Heart left ventricle (tissue), 16 donors: ENCODE measurements at regions of chr1 and their contacts with region 1.

Region 1: GRCh38 chr1:18597160-18598042 is 33.2 kb upstream of the PAX7 start:
- DNase-seq: peak in 4 of 5 donors; percentile 28 to 50 (median 36)
- ATAC-seq: peak in 3 of 4 donors; percentile 80 to 83 (median 81)
- H3K4me3 ChIP-seq: no peak overlapping the region
- H3K27ac ChIP-seq: no peak overlapping the region
- H3K4me1 ChIP-seq: peaks cover 0 to 3% (median 0%) of the 10 kb centered on the region in 12 donors
- H3K27me3 ChIP-seq: peaks cover 2 to 78% (median 19%) of the 10 kb centered on the region in 9 donors
- CTCF ChIP-seq: peak; percentile 80 to 98 (median 90)
- POLR2A ChIP-seq: no peak

Region 2: GRCh38 chr1:18360251-18360650 is 237.2 kb before region 1 on chr1:
- intact Hi-C with region 1: no loop called
- DNase-seq: no peak
- ATAC-seq: no peak
- H3K4me3 ChIP-seq: no peak overlapping the region
- H3K27ac ChIP-seq: no peak overlapping the region
- H3K4me1 ChIP-seq: no peaks in the 10 kb centered on the region
- H3K27me3 ChIP-seq: peaks cover 0 to 67% (median 5%) of the 10 kb centered on the region in 9 donors
- CTCF ChIP-seq: no peak
- POLR2A ChIP-seq: no peak

Region 3: DNA sequence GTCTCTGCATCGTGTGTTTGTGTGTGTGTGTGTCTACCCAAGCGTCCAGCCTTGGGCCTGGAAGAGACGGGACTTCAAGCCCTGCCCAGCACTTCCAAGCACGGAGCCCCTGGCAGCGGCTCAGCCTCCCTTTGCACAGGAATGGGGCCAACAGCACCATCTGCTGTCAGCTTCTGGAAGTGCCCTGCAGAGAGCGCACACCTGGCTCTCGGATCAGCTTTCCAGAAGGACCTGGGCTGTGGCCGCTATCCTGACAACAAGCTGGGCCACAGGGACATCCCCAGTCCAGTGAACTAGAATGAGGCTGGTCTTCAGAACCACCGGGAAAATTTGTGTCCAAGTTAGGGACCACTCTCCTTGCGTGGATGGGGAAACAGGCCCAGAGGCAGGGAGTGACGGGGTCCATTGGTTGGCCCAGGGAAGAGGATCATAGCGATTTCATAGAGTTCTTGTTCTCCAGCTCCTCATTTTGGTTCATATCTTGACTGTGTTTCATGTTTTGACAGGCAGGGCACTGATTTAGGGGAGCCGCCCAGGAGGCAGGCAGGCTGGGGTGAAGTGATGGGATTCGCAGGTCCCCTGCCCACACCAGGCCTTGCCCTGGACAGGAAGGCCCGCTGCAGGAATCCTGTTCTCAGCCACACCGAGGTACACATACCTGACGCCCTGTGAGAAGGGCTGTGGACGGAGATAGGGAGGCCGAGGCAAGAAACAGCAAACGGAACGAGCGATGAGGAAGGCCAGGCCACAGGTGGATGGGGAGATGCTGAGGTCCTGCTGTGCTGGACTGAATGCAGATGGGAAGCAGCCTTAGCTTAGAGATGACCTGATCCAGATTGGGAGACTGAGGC is 223.6 kb after region 1 on chr1:
- intact Hi-C with region 1: loop called (anchors 1 to 5 kb)
- DNase-seq: peak; percentile 54 to 83 (median 73)
- ATAC-seq: peak; percentile 62 to 91 (median 87)
- H3K4me3 ChIP-seq: no peak overlapping the region
- H3K27ac ChIP-seq: no peak overlapping the region
- H3K4me1 ChIP-seq: peaks cover 0 to 4% (median 0%) of the 10 kb centered on the region in 12 donors
- H3K27me3 ChIP-seq: peaks cover 9 to 49% (median 21%) of the 10 kb centered on the region in 9 donors
- CTCF ChIP-seq: peak; percentile 73 to 92 (median 81)
- POLR2A ChIP-seq: no peak

Region 4: DNA sequence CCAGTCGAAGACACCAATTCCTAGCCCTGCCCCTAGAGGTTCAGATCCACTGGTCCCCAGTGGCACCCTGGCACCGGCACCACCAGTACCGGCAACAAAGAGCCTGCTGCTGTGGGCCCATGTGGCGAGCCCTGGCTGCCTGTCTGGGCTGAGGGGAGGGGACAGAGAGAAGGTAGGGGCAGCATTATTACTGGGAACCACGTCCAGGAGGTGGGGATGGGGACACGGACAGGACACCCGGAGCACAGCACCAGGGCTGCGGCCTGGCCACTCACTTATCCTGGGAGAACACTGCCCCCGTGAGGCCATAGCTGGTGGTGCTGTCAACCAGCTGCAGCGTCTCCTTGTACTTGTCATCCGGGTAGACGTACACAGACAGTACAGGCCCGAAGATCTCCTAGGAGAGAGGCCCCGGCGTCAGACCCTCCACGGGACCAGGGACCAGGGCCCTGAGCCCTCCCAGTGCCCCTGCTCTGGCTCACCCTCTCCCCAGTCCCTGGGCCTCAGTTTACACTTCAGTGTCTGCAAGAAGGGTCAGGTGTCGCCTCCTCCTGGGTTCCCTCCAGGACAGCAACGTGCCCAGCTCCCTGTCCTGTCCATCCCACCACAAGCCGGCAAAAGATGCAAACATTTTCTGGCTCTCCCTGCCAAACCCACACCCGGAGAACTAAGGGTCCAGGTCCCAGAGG is 277.9 kb after region 1 on chr1:
- intact Hi-C with region 1: loop called (anchors 1 to 5 kb)
- DNase-seq: peak; percentile 56 to 88 (median 81)
- ATAC-seq: peak; percentile 47 to 86 (median 73)
- H3K4me3 ChIP-seq: no peak overlapping the region
- H3K27ac ChIP-seq: no peak overlapping the region
- H3K4me1 ChIP-seq: peaks cover 0 to 8% (median 0%) of the 10 kb centered on the region in 12 donors
- H3K27me3 ChIP-seq: no peaks in the 10 kb centered on the region
- CTCF ChIP-seq: peak; percentile 72 to 90 (median 84)
- POLR2A ChIP-seq: no peak